ENCODE measurements at regions of chr1 and their contacts with region 1.

Region 1: DNA sequence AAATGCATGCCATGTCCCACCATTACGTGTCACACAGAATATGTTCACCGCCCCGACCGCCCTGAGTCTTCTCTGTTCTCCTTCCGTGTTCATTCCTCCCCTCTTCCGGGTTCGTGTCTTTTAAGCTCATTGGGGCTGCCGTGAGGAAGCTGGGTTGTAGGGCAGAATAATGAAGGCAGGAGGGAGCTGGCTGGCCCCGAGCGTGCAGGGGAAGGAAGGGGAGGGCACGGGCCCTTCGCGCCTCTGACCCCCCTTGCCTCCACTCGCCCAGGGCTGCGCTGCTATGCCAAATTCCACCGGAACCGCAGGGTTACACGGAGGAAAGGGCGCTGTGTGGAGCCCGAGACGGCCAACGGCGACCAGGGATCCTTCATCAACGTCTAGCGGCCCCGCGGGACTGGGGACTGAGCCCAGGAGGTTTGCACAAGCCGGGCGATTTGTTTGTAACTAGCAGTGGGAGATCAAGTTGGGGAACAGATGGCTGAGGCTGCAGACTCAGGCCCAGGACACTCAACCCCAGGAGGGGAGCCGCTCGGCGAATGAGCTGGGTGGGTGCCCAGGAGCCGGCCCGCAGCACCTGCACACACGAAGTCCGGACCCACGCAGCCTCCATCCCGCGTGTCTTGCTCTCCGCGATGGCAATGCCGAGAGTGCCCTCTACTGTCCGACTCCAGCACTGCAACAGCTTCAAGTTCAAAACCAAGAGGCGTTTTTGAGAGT is 16.5 kb upstream of the AGTRAP start:
- DNase-seq: peak; percentile 80 to 94 (median 88)
- ATAC-seq: peak; percentile 89
- H3K4me3 ChIP-seq: peak overlapping the region; percentile 54
- H3K4me3 Mint-ChIP-seq: peak overlapping the region; percentile 86
- H3K27ac ChIP-seq: peak overlapping the region; percentile 15 to 64
- H3K27ac Mint-ChIP-seq: peak overlapping the region; percentile 86
- H3K4me1 ChIP-seq: peaks cover 18% of the 10 kb centered on the region
- H3K4me1 Mint-ChIP-seq: peaks cover 17% of the 10 kb centered on the region
- H3K27me3 ChIP-seq: no peaks in the 10 kb centered on the region
- H3K27me3 Mint-ChIP-seq: no peaks in the 10 kb centered on the region
- CTCF ChIP-seq: peak; percentile 96

Region 2: GRCh38 chr1:11337580-11338073 is 381.8 kb before region 1 on chr1:
- CTCF ChIA-PET with region 1: no interaction called
- POLR2A ChIA-PET with region 1: no interaction called
- intact Hi-C with region 1: loop called in 1 of 2 experiments (anchors 1 kb)
- DNase-seq: peak; percentile 55 to 81 (median 66)
- ATAC-seq: peak; percentile 74
- H3K4me3 ChIP-seq: no peak overlapping the region
- H3K4me3 Mint-ChIP-seq: no peak overlapping the region
- H3K27ac ChIP-seq: no peak overlapping the region
- H3K27ac Mint-ChIP-seq: no peak overlapping the region
- H3K4me1 ChIP-seq: peaks cover 5% of the 10 kb centered on the region
- H3K4me1 Mint-ChIP-seq: peaks cover 16% of the 10 kb centered on the region
- H3K27me3 ChIP-seq: peaks cover 0 to 11% of the 10 kb centered on the region in 2 experiments
- H3K27me3 Mint-ChIP-seq: peaks cover 14% of the 10 kb centered on the region
- CTCF ChIP-seq: peak; percentile 86

Region 3: DNA sequence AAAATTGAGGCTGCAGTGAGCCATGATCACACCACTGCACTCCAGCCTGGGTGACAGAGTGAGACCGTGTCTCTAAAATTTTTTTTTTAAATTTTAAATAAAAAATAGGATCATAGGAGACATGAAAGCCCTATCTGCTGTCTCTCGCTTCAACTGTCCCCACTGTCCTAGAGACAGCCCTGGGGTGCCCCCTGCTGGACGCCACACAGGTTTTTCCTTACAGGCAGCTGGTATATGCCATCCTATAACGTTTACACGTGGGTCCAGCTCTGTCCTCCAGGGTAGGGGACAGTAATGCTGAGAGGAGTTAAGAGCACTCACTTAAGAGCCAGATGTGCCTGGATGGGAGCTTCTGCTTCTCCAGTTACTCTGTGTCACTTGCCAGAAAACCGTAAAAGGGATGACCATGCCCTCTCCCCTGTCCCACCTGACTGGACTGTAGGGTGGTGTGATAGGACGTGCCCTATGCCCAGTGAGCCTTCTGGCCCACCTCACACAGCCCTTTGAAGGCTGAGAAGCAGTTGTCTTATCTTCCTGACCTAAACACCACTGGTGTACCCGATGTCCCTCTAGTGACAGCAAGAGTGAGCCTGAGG is 73.7 kb before region 1 on chr1:
- CTCF ChIA-PET with region 1: interaction called, 47 read pairs
- POLR2A ChIA-PET with region 1: interaction called, 28 read pairs
- intact Hi-C with region 1: loop called (anchors 1 kb)
- DNase-seq: peak; percentile 71 to 90 (median 78)
- ATAC-seq: peak; percentile 59
- H3K4me3 ChIP-seq: no peak overlapping the region
- H3K4me3 Mint-ChIP-seq: no peak overlapping the region
- H3K27ac ChIP-seq: no peak overlapping the region
- H3K27ac Mint-ChIP-seq: no peak overlapping the region
- H3K4me1 ChIP-seq: peaks cover 26% of the 10 kb centered on the region
- H3K4me1 Mint-ChIP-seq: peaks cover 19% of the 10 kb centered on the region
- H3K27me3 ChIP-seq: no peaks in the 10 kb centered on the region
- H3K27me3 Mint-ChIP-seq: peaks cover 5% of the 10 kb centered on the region
- CTCF ChIP-seq: peak; percentile 75

Region 4: DNA sequence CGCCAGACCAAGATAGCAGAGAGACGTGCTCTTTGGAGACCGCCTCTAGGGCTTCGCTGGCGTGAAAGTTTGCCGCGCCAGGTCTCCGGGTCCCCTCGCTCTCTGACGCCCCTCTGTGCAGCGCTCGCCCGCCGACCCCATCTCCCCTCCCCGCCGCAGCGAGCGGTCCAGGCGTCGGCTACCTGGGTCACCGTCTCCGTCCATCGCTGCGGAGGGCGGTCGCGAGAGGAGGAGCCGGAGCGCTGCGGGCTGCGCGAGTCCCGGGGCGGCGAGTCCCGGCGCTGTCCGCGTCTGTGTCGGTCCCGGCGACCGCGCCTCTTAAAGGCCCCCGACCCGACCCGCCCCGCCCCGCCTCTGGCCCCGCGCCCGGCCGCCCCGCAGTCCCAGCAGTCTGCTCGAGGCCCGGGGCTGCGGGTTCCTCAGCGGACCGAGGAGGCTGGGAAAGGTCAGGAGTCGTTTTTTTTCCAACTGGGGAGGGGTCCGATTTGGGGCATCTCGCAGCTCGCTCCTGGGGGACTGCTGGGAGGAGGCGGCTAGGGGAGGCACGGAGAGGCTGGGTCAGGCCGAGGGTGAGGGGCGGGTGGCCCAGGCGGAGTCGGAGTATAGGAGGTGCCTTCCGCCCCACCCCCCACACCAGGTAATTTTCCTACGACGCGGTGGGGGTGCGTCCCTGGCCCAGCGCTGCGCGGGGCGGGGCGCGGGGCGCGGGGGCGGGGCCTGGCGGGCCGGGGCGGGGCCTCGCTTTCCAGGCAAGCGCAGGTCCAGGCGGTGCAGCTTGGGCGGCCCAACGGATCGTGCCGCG is 65.1 kb before region 1 on chr1 and contains the starts of genes FBXO2 and FBXO44:
- CTCF ChIA-PET with region 1: interaction called, 47 read pairs
- POLR2A ChIA-PET with region 1: interaction called, 38 read pairs
- intact Hi-C with region 1: loop called (anchors 1 kb)
- DNase-seq: peak; percentile 44 to 83 (median 66)
- ATAC-seq: peak; percentile 76
- H3K4me3 ChIP-seq: peak within 1 kb of the TSS; percentile 69
- H3K4me3 Mint-ChIP-seq: peak within 1 kb of the TSS; percentile 83
- H3K27ac ChIP-seq: no peak within 1 kb of the TSS
- H3K27ac Mint-ChIP-seq: peak within 1 kb of the TSS; percentile 51
- H3K4me1 ChIP-seq: peaks cover 51% of the 10 kb centered on the region
- H3K4me1 Mint-ChIP-seq: peaks cover 44% of the 10 kb centered on the region
- H3K27me3 ChIP-seq: no peaks in the 10 kb centered on the region
- H3K27me3 Mint-ChIP-seq: no peaks in the 10 kb centered on the region
- CTCF ChIP-seq: no peak
- total RNA-seq, gene FBXO2: 3.2 to 3.7 TPM
- total RNA-seq, gene FBXO44: 44.9 to 48.4 TPM

Region 5: GRCh38 chr1:11661103-11661502 is 58.4 kb before region 1 on chr1:
- CTCF ChIA-PET with region 1: interaction called, 60 read pairs
- POLR2A ChIA-PET with region 1: interaction called, 52 read pairs
- intact Hi-C with region 1: loop called (anchors 1 kb)
- DNase-seq: no peak
- ATAC-seq: no peak
- H3K4me3 ChIP-seq: no peak overlapping the region
- H3K4me3 Mint-ChIP-seq: peak overlapping the region; percentile 11
- H3K27ac ChIP-seq: no peak overlapping the region
- H3K27ac Mint-ChIP-seq: no peak overlapping the region
- H3K4me1 ChIP-seq: peaks cover 20% of the 10 kb centered on the region
- H3K4me1 Mint-ChIP-seq: peaks cover under 1% of the 10 kb centered on the region
- H3K27me3 ChIP-seq: no peaks in the 10 kb centered on the region
- H3K27me3 Mint-ChIP-seq: no peaks in the 10 kb centered on the region
- CTCF ChIP-seq: no peak

Region 6: DNA sequence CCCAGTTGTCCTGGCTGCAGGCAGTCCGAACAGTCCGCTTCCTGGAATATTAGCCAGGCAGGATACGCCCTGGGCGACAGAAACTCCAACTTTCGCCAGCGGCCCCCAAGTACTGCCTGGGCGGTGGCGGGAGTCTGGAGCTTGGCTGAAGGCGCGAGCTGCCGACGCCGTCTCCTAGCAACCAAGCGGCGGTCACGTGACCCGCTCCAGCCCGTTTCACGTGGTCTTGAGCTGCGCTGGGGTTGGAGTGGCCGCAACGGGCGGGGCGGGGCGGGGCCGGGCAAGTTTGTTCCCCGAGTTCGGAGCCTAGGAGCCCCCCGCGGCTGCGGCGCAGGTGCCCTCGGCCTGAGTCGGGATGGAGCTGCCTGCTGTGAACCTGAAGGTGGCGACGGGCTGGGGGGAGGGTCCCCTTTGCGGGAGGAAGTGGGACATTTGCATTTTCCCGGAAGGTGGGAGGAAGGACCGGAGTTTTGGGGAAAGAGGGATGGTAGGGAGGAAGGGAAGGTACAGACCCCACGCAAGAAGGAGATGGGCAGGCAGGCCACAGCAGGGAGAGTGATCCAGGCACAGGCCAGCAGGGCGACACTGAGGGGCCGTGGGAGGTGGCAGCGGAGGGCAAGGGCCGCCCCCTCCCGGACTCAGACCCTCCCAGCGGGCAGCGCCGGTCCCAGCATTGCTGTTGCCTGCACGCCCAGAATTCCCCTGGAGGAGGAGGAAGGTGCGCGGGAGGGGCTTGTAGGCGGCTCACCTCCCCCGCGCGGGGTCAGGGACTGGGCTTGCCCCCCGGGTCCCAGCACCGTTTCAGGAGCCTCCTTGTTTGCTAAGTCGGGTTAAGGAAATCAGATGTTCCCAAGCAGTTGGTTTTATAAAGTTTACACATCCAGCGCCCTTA is 16.6 kb after region 1 on chr1 and contains the start of gene AGTRAP:
- CTCF ChIA-PET with region 1: interaction called, 30 read pairs
- POLR2A ChIA-PET with region 1: interaction called, 44 read pairs
- intact Hi-C with region 1: loop called in 1 of 2 experiments (anchors 2 kb)
- DNase-seq: peak; percentile 72 to 95 (median 81)
- ATAC-seq: peak; percentile 65
- H3K4me3 ChIP-seq: peak within 1 kb of the TSS; percentile 99
- H3K4me3 Mint-ChIP-seq: peak within 1 kb of the TSS; percentile 96
- H3K27ac ChIP-seq: peak within 1 kb of the TSS; percentile 75
- H3K27ac Mint-ChIP-seq: peak within 1 kb of the TSS; percentile 43
- H3K4me1 ChIP-seq: peaks cover 74% of the 10 kb centered on the region
- H3K4me1 Mint-ChIP-seq: peaks cover 73% of the 10 kb centered on the region
- H3K27me3 ChIP-seq: no peaks in the 10 kb centered on the region
- H3K27me3 Mint-ChIP-seq: no peaks in the 10 kb centered on the region
- CTCF ChIP-seq: no peak
- total RNA-seq, gene AGTRAP: 21.3 to 21.8 TPM

Region 7: DNA sequence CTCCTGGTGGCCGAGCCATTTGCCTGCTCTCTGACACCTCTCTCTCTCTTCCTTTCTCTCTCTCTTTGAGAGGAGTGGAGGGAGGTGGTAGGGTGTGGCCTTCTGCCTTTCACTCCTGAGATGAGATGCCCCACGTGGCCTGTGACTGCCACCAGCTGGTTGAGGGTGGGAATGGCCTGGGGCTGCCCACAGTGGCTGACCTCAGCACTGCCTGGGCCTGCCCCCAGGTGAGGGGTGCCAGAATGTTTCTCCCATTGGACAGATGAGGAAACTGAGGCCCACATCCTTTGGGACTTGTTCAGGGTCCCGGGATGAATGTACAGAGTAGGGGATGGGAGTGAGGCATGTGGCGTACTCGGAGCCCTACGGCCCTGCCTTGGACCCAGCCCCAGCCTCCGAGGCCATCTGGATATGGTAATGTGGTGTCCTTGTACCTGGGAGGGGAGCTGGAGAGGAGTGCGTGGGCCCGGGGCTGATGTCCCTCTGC is 29.8 kb after region 1 on chr1:
- CTCF ChIA-PET with region 1: interaction called, 6 read pairs
- POLR2A ChIA-PET with region 1: interaction called, 10 read pairs
- intact Hi-C with region 1: loop called in 1 of 2 experiments (anchors 2 kb)
- DNase-seq: peak in 13 of 14 experiments; percentile 28 to 77 (median 43)
- ATAC-seq: peak; percentile 99
- H3K4me3 ChIP-seq: no peak overlapping the region
- H3K4me3 Mint-ChIP-seq: no peak overlapping the region
- H3K27ac ChIP-seq: no peak overlapping the region
- H3K27ac Mint-ChIP-seq: peak overlapping the region; percentile 24
- H3K4me1 ChIP-seq: peaks cover 15% of the 10 kb centered on the region
- H3K4me1 Mint-ChIP-seq: peaks cover 7% of the 10 kb centered on the region
- H3K27me3 ChIP-seq: no peaks in the 10 kb centered on the region
- H3K27me3 Mint-ChIP-seq: no peaks in the 10 kb centered on the region
- CTCF ChIP-seq: peak; percentile 71

Region 8: GRCh38 chr1:12005488-12006166 is 286.2 kb after region 1 on chr1:
- CTCF ChIA-PET with region 1: no interaction called
- POLR2A ChIA-PET with region 1: no interaction called
- intact Hi-C with region 1: no loop called
- DNase-seq: no peak
- ATAC-seq: no peak
- H3K4me3 ChIP-seq: no peak overlapping the region
- H3K4me3 Mint-ChIP-seq: no peak overlapping the region
- H3K27ac ChIP-seq: no peak overlapping the region
- H3K27ac Mint-ChIP-seq: no peak overlapping the region
- H3K4me1 ChIP-seq: no peaks in the 10 kb centered on the region
- H3K4me1 Mint-ChIP-seq: no peaks in the 10 kb centered on the region
- H3K27me3 ChIP-seq: no peaks in the 10 kb centered on the region
- H3K27me3 Mint-ChIP-seq: no peaks in the 10 kb centered on the region
- CTCF ChIP-seq: no peak

Measured in CD4-positive, alpha-beta T cell (primary cell).